Mammary epithelial cell (primary cell): ENCODE measurements at regions of chr5 and their contacts with region 1.

Region 1: GRCh38 chr5:163564321-163564938 is 59.0 kb downstream of the MAT2B start:
- DNase-seq: peak; percentile 42
- H3K4me3 ChIP-seq: no peak overlapping the region
- H3K27ac ChIP-seq: no peak overlapping the region
- H3K4me1 ChIP-seq: peaks cover 9% of the 10 kb centered on the region
- H3K27me3 ChIP-seq: no peaks in the 10 kb centered on the region
- CTCF ChIP-seq: peak; percentile 77 to 90

Region 2: GRCh38 chr5:164475339-164475977 is 911.0 kb after region 1 on chr5:
- CTCF ChIA-PET with region 1: no interaction called
- dilution Hi-C with region 1: loop called (anchors 25 kb)
- in situ Hi-C with region 1: loop called in 1 of 2 experiments (anchors 25 kb)
- intact Hi-C with region 1: loop called (anchors 2 kb)
- DNase-seq: peak; percentile 3
- H3K4me3 ChIP-seq: no peak overlapping the region
- H3K27ac ChIP-seq: no peak overlapping the region
- H3K4me1 ChIP-seq: no peaks in the 10 kb centered on the region
- H3K27me3 ChIP-seq: no peaks in the 10 kb centered on the region
- CTCF ChIP-seq: peak; percentile 70 to 82

Region 3: DNA sequence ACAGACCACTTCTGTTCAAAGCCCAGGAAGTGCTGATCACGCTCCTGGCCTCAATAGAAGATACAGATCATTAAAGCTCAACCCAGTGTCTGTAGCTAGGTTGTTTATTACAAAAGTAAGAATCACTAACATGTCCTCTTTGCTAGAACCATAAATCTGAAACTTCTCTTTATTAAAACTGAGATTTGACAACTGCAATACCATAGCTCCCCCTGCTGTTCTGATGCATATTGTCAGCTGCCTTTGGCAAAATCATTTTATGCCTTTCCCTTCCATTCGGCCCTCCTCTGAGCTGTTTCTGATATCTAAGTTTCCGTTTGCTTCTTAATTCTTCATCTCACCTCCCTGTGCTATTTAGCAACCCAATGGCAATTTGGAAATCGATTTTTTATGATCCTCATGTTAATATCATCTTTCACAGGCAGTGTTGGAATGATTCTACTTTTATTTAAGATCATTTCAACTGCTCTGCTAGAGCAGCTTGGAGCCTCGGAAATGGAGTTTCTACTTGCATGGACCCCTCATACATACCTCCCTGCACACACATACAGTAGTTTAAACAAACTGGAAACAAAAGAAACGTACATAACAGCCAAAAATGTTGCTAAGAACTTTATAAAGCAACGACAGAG is 939.8 kb after region 1 on chr5:
- CTCF ChIA-PET with region 1: interaction called, 3 read pairs
- dilution Hi-C with region 1: loop called (anchors 25 kb)
- in situ Hi-C with region 1: loop called (anchors 10 to 25 kb)
- intact Hi-C with region 1: loop called (anchors 1 kb)
- DNase-seq: peak; percentile 34
- H3K4me3 ChIP-seq: no peak overlapping the region
- H3K27ac ChIP-seq: no peak overlapping the region
- H3K4me1 ChIP-seq: no peaks in the 10 kb centered on the region
- H3K27me3 ChIP-seq: peaks cover 5% of the 10 kb centered on the region
- CTCF ChIP-seq: peak; percentile 75 to 84

Region 4: DNA sequence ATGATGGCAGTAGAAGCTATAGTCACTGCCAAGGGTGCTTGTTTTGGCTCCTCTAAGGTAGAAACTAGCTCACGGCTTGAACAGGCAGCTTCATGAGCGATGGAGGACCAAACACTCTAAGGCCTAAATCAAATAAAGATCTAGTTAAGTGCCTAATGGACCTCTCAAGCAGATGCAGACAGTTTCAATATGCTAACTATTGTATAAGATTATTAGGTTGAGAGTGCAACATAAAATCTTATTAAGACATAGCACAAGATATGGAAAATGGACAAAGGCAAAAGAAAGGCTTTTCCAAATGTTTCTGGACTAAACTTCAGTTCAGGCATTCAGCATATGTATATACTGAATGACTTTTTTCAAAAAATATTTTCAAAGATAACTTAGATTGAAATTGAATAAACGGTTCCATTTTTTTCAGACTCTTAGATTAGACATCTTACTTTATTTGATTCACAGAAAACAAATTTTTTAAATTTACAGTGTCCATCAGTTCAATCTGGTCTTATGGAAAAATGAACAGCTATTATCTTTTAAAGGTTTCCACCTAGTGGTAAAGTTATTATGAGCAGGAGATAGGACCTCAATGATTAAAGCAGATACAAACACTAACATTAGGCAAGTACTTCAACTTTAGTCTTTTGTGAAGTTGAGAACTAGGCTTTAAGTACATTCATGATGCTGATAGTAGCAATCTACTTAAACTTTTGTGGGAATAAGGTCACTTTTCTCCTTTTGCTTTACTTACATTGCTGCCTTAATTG is 1108.7 kb after region 1 on chr5:
- CTCF ChIA-PET with region 1: no interaction called
- dilution Hi-C with region 1: no loop called
- in situ Hi-C with region 1: no loop called
- intact Hi-C with region 1: loop called (anchors 10 kb)
- DNase-seq: peak; percentile 5
- H3K4me3 ChIP-seq: no peak overlapping the region
- H3K27ac ChIP-seq: no peak overlapping the region
- H3K4me1 ChIP-seq: no peaks in the 10 kb centered on the region
- H3K27me3 ChIP-seq: no peaks in the 10 kb centered on the region
- CTCF ChIP-seq: peak; percentile 28 to 50

Region 5: GRCh38 chr5:165209086-165209727 is 1644.8 kb after region 1 on chr5:
- CTCF ChIA-PET with region 1: no interaction called
- dilution Hi-C with region 1: no loop called
- in situ Hi-C with region 1: loop called in 1 of 2 experiments (anchors 25 kb)
- intact Hi-C with region 1: loop called (anchors 5 kb)
- DNase-seq: peak; percentile 2
- H3K4me3 ChIP-seq: no peak overlapping the region
- H3K27ac ChIP-seq: no peak overlapping the region
- H3K4me1 ChIP-seq: no peaks in the 10 kb centered on the region
- H3K27me3 ChIP-seq: no peaks in the 10 kb centered on the region
- CTCF ChIP-seq: peak; percentile 61 to 62